IMR-90 (cell line): ENCODE measurements at regions of chr15 and their contacts with region 1.

Region 1: DNA sequence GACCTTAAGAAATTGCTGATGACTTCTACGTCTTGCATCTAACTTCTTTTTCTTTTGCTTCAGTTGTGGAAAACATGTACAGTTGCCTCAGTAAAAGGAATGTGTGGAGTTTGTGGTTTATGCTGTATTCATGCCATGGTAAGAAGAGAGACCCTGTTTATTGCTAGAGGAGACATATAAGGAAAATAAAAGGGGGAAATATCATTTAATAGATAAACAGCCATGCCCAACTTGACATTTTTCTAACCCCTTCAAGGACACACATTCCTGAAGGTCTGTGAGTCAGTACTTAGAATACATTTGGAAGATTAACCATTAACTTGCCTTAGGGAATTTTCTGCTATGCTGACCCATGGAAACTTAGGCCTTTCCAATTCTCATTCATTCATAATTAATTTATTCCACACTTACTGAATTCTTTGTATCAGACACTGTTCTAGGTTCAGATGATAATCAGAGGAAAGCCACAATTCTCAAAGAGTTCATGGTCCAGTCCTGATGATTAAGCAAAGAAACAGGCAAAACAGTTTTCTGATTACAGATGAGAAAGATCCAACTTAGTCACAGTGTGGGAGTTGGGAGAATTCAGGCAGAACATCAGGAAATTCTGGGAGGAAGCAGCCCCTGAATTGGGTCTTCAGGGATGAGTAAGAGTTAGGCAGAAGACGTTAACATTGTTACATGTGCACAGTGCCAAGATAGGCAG is 329.8 kb upstream of the RASGRP1 start:
- DNase-seq: peak; percentile 96
- ATAC-seq: peak; percentile 71
- H3K4me3 ChIP-seq: no peak overlapping the region
- H3K27ac ChIP-seq: peak overlapping the region; percentile 100; the same call in 1 of the 2 replicates
- H3K4me1 ChIP-seq: peaks cover 21% of the 10 kb centered on the region
- H3K27me3 ChIP-seq: no peaks in the 10 kb centered on the region
- CTCF ChIP-seq: no peak
- POLR2A ChIP-seq: no peak
- RAD21 ChIP-seq: no peak

Region 2: DNA sequence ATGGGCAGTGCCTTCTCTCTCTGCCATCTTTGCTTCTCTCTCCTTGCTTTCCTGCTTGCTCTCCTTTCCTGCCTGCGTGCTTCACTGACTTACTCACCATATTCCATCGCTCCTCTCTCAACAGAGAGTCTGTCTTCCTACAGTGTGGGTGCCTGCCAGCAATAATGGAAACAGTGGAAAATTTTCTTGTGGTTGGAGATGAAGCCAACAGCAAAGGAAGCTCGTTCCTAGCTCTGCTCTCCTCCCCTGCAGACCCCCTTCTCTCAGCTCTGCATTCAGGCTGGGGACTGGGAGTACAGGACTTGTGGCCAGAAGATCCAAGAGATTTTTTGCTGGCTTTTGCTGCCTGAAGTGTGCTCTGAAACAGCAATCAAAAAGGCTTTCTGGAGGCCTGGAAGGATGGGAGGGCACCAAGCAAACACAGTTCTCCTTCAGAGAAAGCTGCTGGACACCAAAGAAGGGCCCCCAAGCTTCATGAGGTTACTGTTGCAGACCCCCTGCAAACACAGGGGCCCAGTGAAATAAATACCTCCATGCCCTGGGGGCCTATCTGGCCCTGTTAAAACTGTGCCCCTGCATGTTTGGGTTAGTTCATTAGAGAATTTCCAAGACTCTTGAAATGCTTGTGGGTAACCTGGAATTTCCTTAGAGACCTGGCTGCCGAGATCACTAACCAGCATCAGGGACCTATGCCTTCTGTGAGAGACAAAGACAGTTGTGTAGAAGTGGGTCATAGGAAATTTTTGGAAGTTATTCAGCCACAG is 179.9 kb before region 1 on chr15:
- CTCF ChIA-PET with region 1: no interaction called
- POLR2A ChIA-PET with region 1: no interaction called
- dilution Hi-C with region 1: no loop called
- in situ Hi-C with region 1: no loop called
- intact Hi-C with region 1: loop called (anchors 2 kb)
- DNase-seq: peak; percentile 96
- ATAC-seq: peak; percentile 92
- H3K4me3 ChIP-seq: no peak overlapping the region
- H3K27ac ChIP-seq: peak overlapping the region; percentile 88
- H3K4me1 ChIP-seq: peaks cover 12% of the 10 kb centered on the region
- H3K27me3 ChIP-seq: no peaks in the 10 kb centered on the region
- CTCF ChIP-seq: no peak
- POLR2A ChIP-seq: no peak
- RAD21 ChIP-seq: peak; percentile 28; the same call in 1 of the 2 replicates

Region 3: GRCh38 chr15:38826880-38827279 is 67.5 kb before region 1 on chr15:
- CTCF ChIA-PET with region 1: interaction called, 3 read pairs
- POLR2A ChIA-PET with region 1: no interaction called
- dilution Hi-C with region 1: no loop called
- in situ Hi-C with region 1: no loop called
- intact Hi-C with region 1: loop called (anchors 2 kb)
- DNase-seq: peak; percentile 22
- ATAC-seq: peak; percentile 77
- H3K4me3 ChIP-seq: no peak overlapping the region
- H3K27ac ChIP-seq: no peak overlapping the region
- H3K4me1 ChIP-seq: peaks cover 8% of the 10 kb centered on the region
- H3K27me3 ChIP-seq: no peaks in the 10 kb centered on the region
- CTCF ChIP-seq: no peak
- POLR2A ChIP-seq: no peak
- RAD21 ChIP-seq: no peak

Region 4: DNA sequence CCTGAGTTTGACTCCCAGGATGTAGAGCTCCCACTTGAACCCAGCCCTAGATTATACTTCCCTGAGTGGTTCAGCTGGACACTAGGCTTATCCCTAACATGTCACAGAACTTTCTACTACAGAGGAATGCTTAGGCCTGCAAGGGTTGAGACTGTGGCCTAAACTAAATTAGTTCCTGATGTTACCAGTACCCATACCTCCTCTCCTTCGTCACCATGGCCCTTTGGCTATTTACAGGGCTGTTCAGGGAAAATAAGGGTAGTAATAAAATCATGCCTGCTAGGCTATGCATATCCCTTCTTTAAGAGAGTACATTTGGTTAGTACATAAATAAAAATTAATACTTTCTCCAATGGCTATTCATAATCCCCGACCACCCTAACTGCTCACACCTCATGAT is 26.6 kb after region 1 on chr15:
- CTCF ChIA-PET with region 1: no interaction called
- POLR2A ChIA-PET with region 1: no interaction called
- dilution Hi-C with region 1: no loop called
- in situ Hi-C with region 1: no loop called
- intact Hi-C with region 1: no loop called
- DNase-seq: no peak
- ATAC-seq: no peak
- H3K4me3 ChIP-seq: no peak overlapping the region
- H3K27ac ChIP-seq: no peak overlapping the region
- H3K4me1 ChIP-seq: no peaks in the 10 kb centered on the region
- H3K27me3 ChIP-seq: no peaks in the 10 kb centered on the region
- CTCF ChIP-seq: no peak
- POLR2A ChIP-seq: no peak
- RAD21 ChIP-seq: no peak

Region 5: GRCh38 chr15:38996111-38996631 is 101.8 kb after region 1 on chr15:
- CTCF ChIA-PET with region 1: interaction called, 4 read pairs
- POLR2A ChIA-PET with region 1: no interaction called
- dilution Hi-C with region 1: no loop called
- in situ Hi-C with region 1: no loop called
- intact Hi-C with region 1: loop called (anchors 2 kb)
- DNase-seq: peak; percentile 90
- ATAC-seq: peak; percentile 74
- H3K4me3 ChIP-seq: no peak overlapping the region
- H3K27ac ChIP-seq: peak overlapping the region; percentile 99; the same call in 1 of the 2 replicates
- H3K4me1 ChIP-seq: peaks cover 28% of the 10 kb centered on the region
- H3K27me3 ChIP-seq: no peaks in the 10 kb centered on the region
- CTCF ChIP-seq: no peak
- POLR2A ChIP-seq: no peak
- RAD21 ChIP-seq: no peak

Region 6: GRCh38 chr15:39140060-39140604 is 245.7 kb after region 1 on chr15:
- CTCF ChIA-PET with region 1: interaction called, 3 read pairs
- POLR2A ChIA-PET with region 1: no interaction called
- dilution Hi-C with region 1: no loop called
- in situ Hi-C with region 1: no loop called
- intact Hi-C with region 1: loop called (anchors 1 kb)
- DNase-seq: peak; percentile 98
- ATAC-seq: peak; percentile 85
- H3K4me3 ChIP-seq: no peak overlapping the region; the same call in 1 of the 2 replicates
- H3K27ac ChIP-seq: peak overlapping the region; percentile 93
- H3K4me1 ChIP-seq: peaks cover 20% of the 10 kb centered on the region
- H3K27me3 ChIP-seq: no peaks in the 10 kb centered on the region
- CTCF ChIP-seq: no peak
- POLR2A ChIP-seq: peak; percentile 56; the same call in 1 of the 2 replicates
- RAD21 ChIP-seq: peak; percentile 31; the same call in 1 of the 2 replicates

Region 7: GRCh38 chr15:39472621-39473297 is 578.4 kb after region 1 on chr15:
- CTCF ChIA-PET with region 1: no interaction called
- POLR2A ChIA-PET with region 1: no interaction called
- dilution Hi-C with region 1: no loop called
- in situ Hi-C with region 1: no loop called
- intact Hi-C with region 1: loop called (anchors 10 kb)
- DNase-seq: peak; percentile 99
- ATAC-seq: peak; percentile 93
- H3K4me3 ChIP-seq: no peak overlapping the region
- H3K27ac ChIP-seq: peak overlapping the region; percentile 99; the same call in 1 of the 2 replicates
- H3K4me1 ChIP-seq: peaks cover 15% of the 10 kb centered on the region; the same call in 1 of the 2 replicates
- H3K27me3 ChIP-seq: no peaks in the 10 kb centered on the region
- CTCF ChIP-seq: no peak
- POLR2A ChIP-seq: no peak
- RAD21 ChIP-seq: no peak